ENCODE measurements at regions of chr19 and their contacts with region 1.

Region 1: DNA sequence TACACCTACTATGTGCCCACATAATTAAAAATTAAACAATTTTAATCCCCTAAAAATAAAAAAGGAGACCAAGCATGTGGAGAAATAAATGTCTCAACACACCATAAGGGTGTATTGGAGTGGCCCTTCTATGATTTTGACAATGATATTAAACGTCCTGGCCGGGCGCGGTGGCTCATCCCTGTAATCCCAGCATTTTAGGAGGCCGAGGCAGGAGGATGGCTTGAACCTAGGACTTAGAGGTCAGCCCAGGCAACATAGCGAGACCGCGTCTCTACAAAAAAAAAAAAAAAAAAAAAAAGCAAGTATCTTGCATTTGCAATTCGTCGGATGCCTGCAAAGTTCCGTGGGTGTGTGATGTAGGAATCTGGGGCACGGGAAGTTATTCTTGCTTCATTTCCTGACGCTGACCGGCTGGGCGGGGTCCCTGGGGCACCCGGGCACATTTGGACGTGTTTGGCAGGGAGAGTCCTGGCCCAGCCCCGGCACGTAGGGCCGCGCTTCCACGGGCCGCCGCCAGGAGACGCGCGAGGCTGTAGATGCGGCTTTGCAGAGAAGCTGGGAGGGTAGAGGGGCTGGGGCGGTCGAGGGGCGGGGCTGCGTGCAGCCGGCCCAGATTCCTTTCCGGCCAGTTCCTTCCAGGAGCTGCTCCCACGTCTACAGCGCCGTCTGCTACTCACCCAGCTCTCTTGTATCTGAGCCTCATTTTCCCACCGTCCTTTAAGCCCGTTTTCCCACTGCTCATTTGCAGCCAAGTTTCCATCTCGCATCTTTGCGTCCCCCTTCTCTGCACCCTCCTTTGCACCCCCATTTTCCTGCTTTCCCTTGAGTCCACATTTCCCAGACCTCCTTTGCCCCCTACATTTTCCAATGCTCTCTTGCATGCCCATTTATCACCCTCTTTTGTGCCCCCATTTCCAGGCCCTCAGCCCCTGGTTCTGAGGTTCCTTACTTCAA is 2.2 kb upstream of the TSPAN16 start:
- DNase-seq: peak; percentile 90
- H3K4me3 Mint-ChIP-seq: peak overlapping the region; percentile 43
- H3K27ac Mint-ChIP-seq: no peak overlapping the region
- H3K4me1 Mint-ChIP-seq: peaks cover 10% of the 10 kb centered on the region
- H3K27me3 Mint-ChIP-seq: peaks cover 13% of the 10 kb centered on the region

Region 2: GRCh38 chr19:11234486-11235075 is 59.1 kb before region 1 on chr19:
- CTCF ChIA-PET with region 1: no interaction called
- POLR2A ChIA-PET with region 1: no interaction called
- intact Hi-C with region 1: no loop called
- DNase-seq: no peak
- H3K4me3 Mint-ChIP-seq: no peak overlapping the region
- H3K27ac Mint-ChIP-seq: no peak overlapping the region
- H3K4me1 Mint-ChIP-seq: no peaks in the 10 kb centered on the region
- H3K27me3 Mint-ChIP-seq: no peaks in the 10 kb centered on the region

Region 3: DNA sequence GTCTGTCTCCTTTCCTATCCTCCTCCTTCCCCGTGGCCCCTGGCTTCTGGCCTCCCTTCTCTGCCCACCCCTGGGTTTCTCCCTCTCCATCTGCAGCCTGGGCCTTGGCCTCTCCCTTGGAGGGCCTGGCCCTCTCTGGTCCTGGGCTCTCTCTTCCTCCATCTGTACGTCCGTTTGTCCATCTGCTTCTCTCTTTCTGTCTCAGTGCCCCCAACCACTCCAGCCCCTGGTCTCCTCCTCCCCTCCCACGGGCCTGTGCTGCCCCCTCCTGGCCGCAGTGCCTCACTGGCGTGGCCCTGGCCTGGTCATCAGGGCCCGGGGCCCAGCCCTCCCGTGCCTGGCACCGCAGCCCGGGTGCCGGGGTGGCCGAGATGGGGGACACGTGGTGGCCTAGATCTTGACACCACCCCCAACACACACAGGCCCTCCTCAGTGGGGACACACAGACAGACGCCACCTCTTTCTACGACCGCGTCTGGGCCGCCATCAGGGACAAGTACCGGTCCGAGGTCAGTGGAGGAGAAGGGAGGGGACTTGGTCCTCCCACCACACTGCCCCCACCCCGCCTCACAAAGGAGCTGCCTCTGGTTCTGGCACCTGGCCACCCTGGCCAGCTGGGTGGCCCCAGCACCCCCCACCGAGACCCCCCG is 153.1 kb after region 1 on chr19:
- CTCF ChIA-PET with region 1: interaction called, 3 read pairs
- POLR2A ChIA-PET with region 1: no interaction called
- intact Hi-C with region 1: loop called (anchors 1 kb)
- DNase-seq: peak; percentile 51
- H3K4me3 Mint-ChIP-seq: no peak overlapping the region
- H3K27ac Mint-ChIP-seq: no peak overlapping the region
- H3K4me1 Mint-ChIP-seq: peaks cover 2% of the 10 kb centered on the region
- H3K27me3 Mint-ChIP-seq: no peaks in the 10 kb centered on the region

Region 4: GRCh38 chr19:11482384-11483050 is 188.8 kb after region 1 on chr19:
- CTCF ChIA-PET with region 1: interaction called, 23 read pairs
- POLR2A ChIA-PET with region 1: no interaction called
- intact Hi-C with region 1: loop called (anchors 2 kb)
- DNase-seq: peak; percentile 91
- H3K4me3 Mint-ChIP-seq: peak overlapping the region; percentile 70
- H3K27ac Mint-ChIP-seq: peak overlapping the region; percentile 52
- H3K4me1 Mint-ChIP-seq: peaks cover 19% of the 10 kb centered on the region
- H3K27me3 Mint-ChIP-seq: peaks cover 17% of the 10 kb centered on the region

Measured in activated CD4-positive, alpha-beta memory T cell treated with anti-CD3 and anti-CD28 coated beads for 36 hours (primary cell).